Dorsolateral prefrontal cortex (tissue), 120 donors: ENCODE measurements at regions of chr18 and their contacts with region 1.

Region 1: GRCh38 chr18:8654503-8655451 is 45.5 kb downstream of the RAB12 start:
- DNase-seq: no peak
- H3K4me3 ChIP-seq: no peak overlapping the region
- H3K27ac ChIP-seq: no peak overlapping the region
- H3K27me3 ChIP-seq: no peaks in the 10 kb centered on the region
- CTCF ChIP-seq: peak; percentile 69 to 97 (median 84)

Region 2: DNA sequence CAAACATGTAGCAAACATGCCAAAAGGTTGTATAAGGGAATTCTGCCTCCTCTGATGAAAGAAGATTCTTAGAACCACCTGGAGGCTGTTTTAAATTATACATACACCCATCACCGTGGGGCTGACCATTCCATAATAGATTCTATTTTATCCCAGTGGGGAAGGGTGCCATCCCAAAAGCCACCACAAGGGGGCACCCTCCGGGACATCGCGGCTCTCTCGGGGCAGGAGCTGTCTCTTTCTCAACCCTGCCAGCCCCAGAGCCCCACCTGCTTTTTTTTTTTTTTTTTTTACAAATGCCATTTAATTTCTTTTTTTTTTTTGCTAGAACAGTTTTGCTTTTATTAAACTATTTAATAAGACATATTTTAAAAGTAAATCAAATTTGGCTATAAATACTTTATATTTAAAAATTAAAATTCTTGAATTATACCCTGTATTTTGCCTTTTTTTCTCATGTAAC is 42.0 kb after region 1 on chr18:
- intact Hi-C with region 1: loop called in 1 of 2 experiments (anchors 2 kb)
- DNase-seq: peak in 8 of 10 donors; percentile 57 to 86 (median 82)
- H3K4me3 ChIP-seq: no peak overlapping the region
- H3K27ac ChIP-seq: no peak overlapping the region
- H3K27me3 ChIP-seq: no peaks in the 10 kb centered on the region
- CTCF ChIP-seq: peak; percentile 85 to 98 (median 94)

Region 3: GRCh38 chr18:8988261-8988871 is 333.6 kb after region 1 on chr18:
- intact Hi-C with region 1: loop called (anchors 2 kb)
- DNase-seq: peak; percentile 39 to 83 (median 72)
- H3K4me3 ChIP-seq: no peak overlapping the region
- H3K27ac ChIP-seq: peak overlapping the region in 1 of 59 donors; percentile 76
- H3K27me3 ChIP-seq: no peaks in the 10 kb centered on the region
- CTCF ChIP-seq: peak; percentile 27 to 91 (median 77)

Region 4: GRCh38 chr18:9082711-9083510 is 428.1 kb after region 1 on chr18:
- intact Hi-C with region 1: loop called in 1 of 2 experiments (anchors 10 kb)
- DNase-seq: no peak
- H3K4me3 ChIP-seq: no peak overlapping the region
- H3K27ac ChIP-seq: peak overlapping the region in 30 of 59 donors; percentile 2 to 68 (median 40)
- H3K27me3 ChIP-seq: no peaks in the 10 kb centered on the region
- CTCF ChIP-seq: no peak

Region 5: DNA sequence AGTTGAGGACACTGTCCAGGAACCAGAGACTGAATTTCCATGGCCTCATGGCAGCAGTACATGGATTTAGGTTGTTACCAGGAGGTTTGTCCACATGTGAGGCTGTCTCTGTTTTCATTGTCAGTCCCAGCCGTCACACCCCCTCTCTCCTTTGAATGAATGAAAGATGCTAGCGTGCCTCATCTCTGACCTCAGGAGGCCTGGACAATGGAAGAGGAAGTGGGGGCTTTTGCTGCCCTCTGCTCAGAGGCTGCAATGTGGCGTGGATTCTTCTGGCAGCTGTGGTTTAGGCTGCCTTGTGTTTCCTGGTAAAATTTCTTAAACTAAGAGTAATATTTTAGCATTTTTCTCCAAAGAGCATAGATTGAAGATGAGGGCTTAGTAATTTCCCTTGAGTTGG is 1100.8 kb after region 1 on chr18:
- intact Hi-C with region 1: no loop called
- DNase-seq: no peak
- H3K4me3 ChIP-seq: no peak overlapping the region
- H3K27ac ChIP-seq: peak overlapping the region in 1 of 59 donors; percentile 2
- H3K27me3 ChIP-seq: no peaks in the 10 kb centered on the region
- CTCF ChIP-seq: no peak